H1 (cell line): ENCODE measurements at regions of chr1 and their contacts with region 1.

Region 1: GRCh38 chr1:153532769-153533599 is 2.8 kb downstream of the S100A6 start:
- DNase-seq: peak; percentile 87 to 96
- H3K4me3 ChIP-seq: peak overlapping the region; percentile 12 to 54 (median 38); a peak in 7 of 8 replicates
- H3K27ac ChIP-seq: no peak overlapping the region
- H3K4me1 ChIP-seq: peaks cover 8 to 35% (median 21%) of the 10 kb centered on the region in 4 experiments
- H3K27me3 ChIP-seq: peaks cover 0 to 19% (median 6%) of the 10 kb centered on the region in 4 experiments; a peak in 5 of 7 replicates
- CTCF ChIP-seq: peak; percentile 85 to 93 (median 86)
- EP300 ChIP-seq: no peak
- POLR2A ChIP-seq: no peak
- RAD21 ChIP-seq: peak; percentile 78 to 92

Region 2: GRCh38 chr1:153389973-153390879 is 142.8 kb before region 1 on chr1:
- CTCF ChIA-PET with region 1: no interaction called
- POLR2A ChIA-PET with region 1: no interaction called
- DNase-seq: no peak
- H3K4me3 ChIP-seq: no peak overlapping the region
- H3K27ac ChIP-seq: no peak overlapping the region
- H3K4me1 ChIP-seq: no peaks in the 10 kb centered on the region
- H3K27me3 ChIP-seq: peaks cover 0 to 2% (median 0%) of the 10 kb centered on the region in 4 experiments; a peak in 1 of 7 replicates
- CTCF ChIP-seq: no peak
- EP300 ChIP-seq: no peak
- POLR2A ChIP-seq: no peak
- RAD21 ChIP-seq: no peak

Region 3: GRCh38 chr1:153494976-153495535 is 37.9 kb before region 1 on chr1:
- CTCF ChIA-PET with region 1: interaction called, 17 read pairs
- POLR2A ChIA-PET with region 1: no interaction called
- DNase-seq: peak; percentile 82 to 100
- H3K4me3 ChIP-seq: no peak overlapping the region
- H3K27ac ChIP-seq: 0 out of 2 replicates have a peak overlapping the region, but pooled peaks have one; percentile 38
- H3K4me1 ChIP-seq: peaks cover 0 to 6% (median 2%) of the 10 kb centered on the region in 4 experiments; a peak in 4 of 7 replicates
- H3K27me3 ChIP-seq: no peaks in the 10 kb centered on the region
- CTCF ChIP-seq: peak; percentile 80 to 94 (median 92)
- EP300 ChIP-seq: peak in 1 of 2 experiments; percentile 66; a peak in 2 of 3 replicates
- POLR2A ChIP-seq: no peak
- RAD21 ChIP-seq: peak; percentile 88 to 97

Region 4: DNA sequence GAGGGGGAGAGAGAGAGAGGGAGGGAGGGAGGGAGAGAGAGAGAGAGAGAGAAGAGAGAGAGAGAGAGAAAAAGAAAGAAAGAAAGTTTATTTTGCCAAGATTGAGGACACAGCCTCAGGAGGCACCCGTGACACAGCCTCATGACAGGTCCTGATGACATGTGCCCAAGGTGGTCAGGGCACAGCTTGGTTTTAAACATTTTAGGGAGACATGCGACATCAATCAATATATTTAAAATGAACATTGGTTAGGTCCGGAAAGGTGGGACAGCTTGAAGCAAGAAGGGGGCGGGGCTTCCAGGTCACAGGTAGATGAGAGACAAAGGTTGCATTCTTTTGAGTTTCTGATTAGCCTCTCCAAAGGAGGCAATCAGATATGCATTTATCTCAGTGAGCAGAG is 12.8 kb before region 1 on chr1:
- CTCF ChIA-PET with region 1: interaction called, 51 read pairs
- POLR2A ChIA-PET with region 1: interaction called, 10 read pairs
- DNase-seq: no peak
- H3K4me3 ChIP-seq: no peak overlapping the region
- H3K27ac ChIP-seq: no peak overlapping the region
- H3K4me1 ChIP-seq: peaks cover 3 to 11% (median 5%) of the 10 kb centered on the region in 4 experiments; a peak in 6 of 7 replicates
- H3K27me3 ChIP-seq: peaks cover 0 to 14% (median 8%) of the 10 kb centered on the region in 4 experiments; a peak in 4 of 7 replicates
- CTCF ChIP-seq: no peak
- EP300 ChIP-seq: no peak
- POLR2A ChIP-seq: no peak
- RAD21 ChIP-seq: no peak

Region 5: DNA sequence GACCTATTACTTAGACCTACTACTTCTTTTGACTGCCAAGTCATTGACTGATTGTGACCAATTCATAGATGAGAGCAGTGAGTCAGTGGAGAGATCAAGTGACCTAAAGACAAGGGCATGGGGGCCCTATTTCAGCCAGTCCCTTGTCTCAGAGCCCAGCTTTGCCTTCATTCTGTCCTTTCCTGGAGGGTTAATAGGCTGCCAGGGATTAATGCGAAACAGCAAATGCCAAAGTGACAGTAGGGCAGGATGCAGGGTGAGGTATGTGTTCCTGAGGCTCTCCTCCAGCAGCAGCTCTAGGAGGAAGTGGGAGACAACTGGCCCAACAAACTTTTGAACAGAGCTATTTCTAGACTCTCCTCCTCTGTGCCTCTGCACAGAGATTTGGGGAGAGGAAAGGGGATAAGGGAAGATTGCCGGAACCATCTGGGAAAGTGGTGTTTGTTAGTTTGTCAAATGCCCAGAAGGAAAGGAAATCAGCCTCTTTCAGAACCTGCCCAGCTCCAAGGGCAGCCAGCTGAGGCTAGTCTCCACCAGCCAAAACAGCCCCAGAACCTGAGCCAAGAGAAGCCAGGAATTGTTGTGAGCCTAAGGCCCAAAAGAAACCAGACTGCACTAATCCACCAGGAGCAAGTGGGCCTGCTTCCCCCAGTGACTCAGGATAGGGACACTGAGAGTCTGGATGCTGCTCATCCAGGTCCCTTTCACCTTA is 21.0 kb after region 1 on chr1:
- CTCF ChIA-PET with region 1: interaction called, 165 read pairs
- POLR2A ChIA-PET with region 1: interaction called, 5 read pairs
- DNase-seq: no peak
- H3K4me3 ChIP-seq: no peak overlapping the region
- H3K27ac ChIP-seq: no peak overlapping the region
- H3K4me1 ChIP-seq: peaks cover 0 to 9% (median 0%) of the 10 kb centered on the region in 4 experiments; a peak in 1 of 7 replicates
- H3K27me3 ChIP-seq: no peaks in the 10 kb centered on the region; a peak in 2 of 7 replicates
- CTCF ChIP-seq: no peak
- EP300 ChIP-seq: no peak
- POLR2A ChIP-seq: no peak
- RAD21 ChIP-seq: no peak

Region 6: DNA sequence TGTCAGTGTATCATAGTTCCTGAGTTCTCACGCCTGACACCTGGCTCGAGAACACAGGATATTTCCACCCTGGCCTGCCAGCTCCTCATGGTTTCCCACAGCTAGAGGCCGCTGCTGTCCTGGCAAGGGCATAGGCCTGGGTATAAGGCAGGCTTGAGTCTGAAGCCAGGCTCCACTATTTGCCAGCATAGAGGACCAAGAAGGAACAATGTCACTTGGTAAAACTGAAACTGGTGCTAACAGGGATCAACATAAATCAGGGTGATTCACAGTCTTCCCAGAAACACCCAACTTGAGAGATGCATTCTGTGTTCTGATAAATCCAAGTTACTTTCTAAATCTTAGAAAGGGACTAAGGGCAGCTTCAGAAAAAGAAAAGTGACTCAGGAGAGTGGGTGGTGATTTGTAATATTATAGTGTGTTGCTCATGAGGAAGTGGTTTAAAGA is 39.6 kb after region 1 on chr1:
- CTCF ChIA-PET with region 1: interaction called, 123 read pairs
- POLR2A ChIA-PET with region 1: interaction called, 10 read pairs
- DNase-seq: peak in 1 of 2 experiments; percentile 43
- H3K4me3 ChIP-seq: no peak overlapping the region
- H3K27ac ChIP-seq: no peak overlapping the region
- H3K4me1 ChIP-seq: peaks cover 4 to 8% (median 7%) of the 10 kb centered on the region in 4 experiments; a peak in 6 of 7 replicates
- H3K27me3 ChIP-seq: 0 out of 7 replicates have a peak, but pooled peaks cover 0 to 4% (median 0%) of the 10 kb centered on the region in 4 experiments
- CTCF ChIP-seq: peak; percentile 91 to 95 (median 92)
- EP300 ChIP-seq: no peak
- POLR2A ChIP-seq: no peak
- RAD21 ChIP-seq: peak; percentile 93 to 97

Region 7: GRCh38 chr1:153598309-153599172 is 65.6 kb after region 1 on chr1:
- CTCF ChIA-PET with region 1: interaction called, 14 read pairs
- POLR2A ChIA-PET with region 1: no interaction called
- DNase-seq: peak; percentile 53 to 63
- H3K4me3 ChIP-seq: no peak overlapping the region
- H3K27ac ChIP-seq: no peak overlapping the region
- H3K4me1 ChIP-seq: peaks cover 3 to 10% (median 5%) of the 10 kb centered on the region in 4 experiments; a peak in 4 of 7 replicates
- H3K27me3 ChIP-seq: no peaks in the 10 kb centered on the region
- CTCF ChIP-seq: no peak
- EP300 ChIP-seq: peak in 1 of 2 experiments; percentile 80; a peak in 1 of 3 replicates
- POLR2A ChIP-seq: peak in 1 of 2 experiments; percentile 59; a peak in 2 of 3 replicates
- RAD21 ChIP-seq: 0 out of 4 replicates have a peak, but pooled peaks of 1 of the 2 experiments have one; percentile 8

Region 8: DNA sequence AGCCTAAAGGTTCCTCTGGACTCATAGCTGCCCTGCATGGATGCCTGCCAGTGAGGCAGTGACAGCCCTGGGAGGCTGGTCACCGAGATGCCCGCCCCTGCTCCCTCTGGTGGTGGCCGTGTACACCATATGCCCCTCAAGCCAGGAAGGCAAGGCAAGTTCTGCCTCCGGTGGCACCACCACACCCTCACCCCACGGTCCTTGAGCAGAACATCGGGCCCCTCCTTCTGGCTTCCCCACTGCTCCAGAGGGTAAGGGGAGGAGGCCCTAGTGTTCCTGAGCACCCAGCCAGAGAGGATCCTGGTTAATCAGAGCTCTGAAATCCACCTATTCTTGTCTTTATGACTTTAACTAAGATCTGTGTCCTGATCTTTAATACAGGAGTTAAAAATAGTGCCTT is 84.7 kb after region 1 on chr1:
- CTCF ChIA-PET with region 1: interaction called, 85 read pairs
- POLR2A ChIA-PET with region 1: interaction called, 4 read pairs
- DNase-seq: peak; percentile 54 to 89
- H3K4me3 ChIP-seq: no peak overlapping the region
- H3K27ac ChIP-seq: no peak overlapping the region
- H3K4me1 ChIP-seq: peaks cover 0 to 13% (median 5%) of the 10 kb centered on the region in 4 experiments; a peak in 6 of 7 replicates
- H3K27me3 ChIP-seq: no peaks in the 10 kb centered on the region
- CTCF ChIP-seq: peak; percentile 93 to 99 (median 94)
- EP300 ChIP-seq: no peak
- POLR2A ChIP-seq: no peak
- RAD21 ChIP-seq: peak; percentile 67 to 83